Dendritic cell treated with granulocyte-macrophage colony-stimulating factor and Interleukin-4, amounts not matched to agents 40 ng/mL and 50 ng/mL, for 4 days (primary cell): ENCODE measurements at regions of chr11 and their contacts with region 1.

Region 1: DNA sequence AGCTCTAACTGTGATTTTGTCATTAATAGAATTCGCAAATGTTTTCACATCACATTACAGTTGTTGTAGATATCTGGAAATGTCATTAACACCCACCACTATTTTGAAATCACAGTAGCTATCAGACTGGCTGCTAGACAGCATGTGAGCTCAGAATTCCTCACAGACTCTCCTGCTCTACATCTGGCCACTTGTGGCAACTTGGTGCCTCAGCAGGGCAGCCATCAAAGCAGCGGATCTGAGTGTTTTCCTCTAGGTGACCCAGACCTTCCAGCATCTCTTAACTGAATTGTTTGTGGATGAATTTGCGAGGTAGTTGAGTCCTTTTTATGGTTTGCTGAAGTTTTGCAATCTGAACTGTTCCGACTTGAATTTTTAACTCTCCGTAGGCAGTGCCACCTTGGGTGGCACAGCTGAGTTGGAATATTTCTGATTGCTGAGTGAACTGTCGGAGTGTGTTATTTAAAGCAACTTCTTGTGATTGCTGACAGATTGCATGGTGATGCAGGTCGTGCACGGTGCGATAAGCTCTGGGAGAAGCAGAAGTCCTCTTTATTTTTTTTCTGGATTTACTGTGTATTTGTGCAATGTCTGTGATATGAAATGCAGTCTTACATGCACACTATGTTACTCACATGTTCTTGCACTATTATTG is 114.0 kb upstream of the PLET1 start:
- H3K4me3 Mint-ChIP-seq: no peak overlapping the region
- H3K27ac Mint-ChIP-seq: no peak overlapping the region
- H3K4me1 Mint-ChIP-seq: no peaks in the 10 kb centered on the region
- H3K27me3 Mint-ChIP-seq: no peaks in the 10 kb centered on the region

Region 2: GRCh38 chr11:113113801-113114706 is 739.4 kb after region 1 on chr11:
- intact Hi-C with region 1: loop called (anchors 5 kb)
- H3K4me3 Mint-ChIP-seq: no peak overlapping the region
- H3K27ac Mint-ChIP-seq: no peak overlapping the region
- H3K4me1 Mint-ChIP-seq: peaks cover 6% of the 10 kb centered on the region
- H3K27me3 Mint-ChIP-seq: peaks cover 3% of the 10 kb centered on the region